ENCODE measurements at regions of chr6 and their contacts with region 1.

Region 1: GRCh38 chr6:161748535-161749416 is 474.9 kb upstream of the AGPAT4 start:
- DNase-seq: no peak
- ATAC-seq: peak; percentile 67
- H3K4me3 ChIP-seq: no peak overlapping the region
- H3K27ac ChIP-seq: no peak overlapping the region
- H3K4me1 ChIP-seq: no peaks in the 10 kb centered on the region
- H3K27me3 ChIP-seq: no peaks in the 10 kb centered on the region
- CTCF ChIP-seq: peak; percentile 31 to 39 (median 35); a peak in 5 of 6 replicates
- EP300 ChIP-seq: no peak
- POLR2A ChIP-seq: no peak
- RAD21 ChIP-seq: peak; percentile 25; the same call in 1 of the 2 replicates

Region 2: GRCh38 chr6:161922631-161923119 is 173.9 kb after region 1 on chr6:
- CTCF ChIA-PET with region 1: interaction called, 3 read pairs
- POLR2A ChIA-PET with region 1: no interaction called
- RAD21 ChIA-PET with region 1: no interaction called
- SMC1A ChIA-PET with region 1: no interaction called
- in situ Hi-C with region 1: no loop called
- intact Hi-C with region 1: loop called (anchors 10 kb)
- DNase-seq: no peak
- ATAC-seq: peak; percentile 83
- H3K4me3 ChIP-seq: no peak overlapping the region
- H3K27ac ChIP-seq: no peak overlapping the region
- H3K4me1 ChIP-seq: no peaks in the 10 kb centered on the region
- H3K27me3 ChIP-seq: no peaks in the 10 kb centered on the region; a peak in 1 of 4 replicates
- CTCF ChIP-seq: peak; percentile 25 to 55 (median 39); a peak in 4 of 6 replicates
- EP300 ChIP-seq: no peak
- POLR2A ChIP-seq: no peak
- RAD21 ChIP-seq: no peak

Measured in GM12878 (cell line).